Activated CD8-positive, alpha-beta T cell treated with anti-CD3 and anti-CD28 coated beads for 36 hours (primary cell): ENCODE measurements at regions of chr5 and their contacts with region 1.

Region 1: DNA sequence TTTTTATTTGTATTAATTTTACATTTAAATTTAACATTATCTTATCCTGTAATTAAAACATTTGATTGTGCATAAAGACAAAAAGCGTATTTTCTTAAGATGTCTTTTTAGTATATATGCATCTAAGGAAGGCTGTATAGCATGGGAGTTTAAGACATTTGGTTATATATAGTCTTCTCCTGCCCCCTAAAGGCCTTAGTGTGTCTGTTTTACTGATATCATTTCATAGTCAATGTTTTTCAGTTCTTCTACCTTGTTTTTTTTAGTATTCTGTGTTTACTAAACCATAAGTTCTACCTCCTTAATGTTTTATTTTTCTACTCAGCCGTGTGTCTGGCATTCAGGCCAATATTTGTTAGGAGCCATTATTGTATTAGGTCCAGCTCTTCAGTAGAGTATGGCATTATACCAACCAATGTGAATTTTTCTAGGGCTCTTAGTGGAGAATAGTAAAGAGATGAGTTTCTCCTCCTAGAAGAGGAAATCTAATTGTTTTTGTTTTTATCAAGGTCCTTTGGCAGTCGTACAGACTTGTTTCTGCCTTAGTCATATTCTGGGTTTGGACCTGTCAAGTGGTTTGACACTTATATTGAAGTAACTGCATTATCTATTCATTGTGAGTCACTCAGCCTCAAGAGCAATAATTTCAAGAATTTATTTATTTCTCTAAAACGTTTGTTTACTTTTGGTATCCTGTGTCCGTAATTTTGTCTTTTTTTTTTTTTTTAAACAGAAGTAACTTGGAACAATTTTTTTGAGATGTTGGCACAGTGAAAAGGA is 74.8 kb downstream of the SLF1 start:
- DNase-seq: no peak
- ATAC-seq: peak; percentile 47
- H3K4me3 Mint-ChIP-seq: no peak overlapping the region
- H3K27ac Mint-ChIP-seq: no peak overlapping the region
- H3K4me1 Mint-ChIP-seq: peaks cover 2% of the 10 kb centered on the region
- H3K27me3 Mint-ChIP-seq: no peaks in the 10 kb centered on the region
- CTCF ChIP-seq: no peak

Region 2: DNA sequence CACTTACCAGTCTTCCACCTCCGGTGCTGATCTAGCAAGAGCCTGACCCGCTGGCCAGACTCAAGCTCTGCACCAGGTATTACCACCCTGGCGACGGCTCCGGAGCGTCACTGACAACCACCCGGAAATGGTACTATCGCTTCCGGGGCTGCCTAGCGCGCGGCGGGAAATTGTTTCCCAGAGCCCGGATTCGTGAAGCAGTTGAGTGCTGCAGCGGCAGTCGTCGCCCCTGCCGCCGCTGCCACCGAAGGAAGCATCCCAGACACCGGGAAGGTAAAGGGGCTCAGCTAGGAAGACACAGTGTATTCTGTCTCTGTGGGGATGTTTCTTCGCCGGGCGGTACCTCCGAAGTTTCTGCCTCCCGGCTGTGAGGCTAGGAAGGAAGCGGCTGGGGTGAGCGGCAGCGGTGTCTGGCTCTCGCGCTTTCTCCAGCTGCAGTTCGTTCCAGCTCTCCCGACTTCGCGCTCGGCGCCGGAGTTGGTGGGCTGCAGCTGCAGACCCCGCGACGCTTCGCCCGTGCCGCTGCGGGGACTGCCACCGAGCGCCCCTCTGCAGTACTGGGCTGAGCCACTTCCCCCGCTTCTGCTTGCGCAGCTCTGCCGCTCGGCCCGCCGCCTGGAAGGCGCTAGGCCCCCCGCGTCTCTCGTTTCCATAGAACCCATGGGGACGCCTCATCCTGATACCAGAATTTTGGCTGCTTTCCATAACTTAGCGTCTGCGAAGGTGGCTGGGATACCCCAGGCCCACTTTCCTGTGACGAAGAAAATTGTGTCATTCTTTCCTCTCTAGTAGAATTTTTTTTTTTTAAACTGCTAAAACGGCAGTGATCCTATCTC is 74.5 kb before region 1 on chr5 and contains the starts of genes KIAA0825 and SLF1:
- CTCF ChIA-PET with region 1: no interaction called
- POLR2A ChIA-PET with region 1: no interaction called
- intact Hi-C with region 1: loop called (anchors 10 kb)
- DNase-seq: peak; percentile 93
- ATAC-seq: peak; percentile 88
- H3K4me3 Mint-ChIP-seq: peak within 1 kb of the TSS; percentile 81
- H3K27ac Mint-ChIP-seq: peak within 1 kb of the TSS; percentile 84
- H3K4me1 Mint-ChIP-seq: peaks cover 34% of the 10 kb centered on the region
- H3K27me3 Mint-ChIP-seq: no peaks in the 10 kb centered on the region
- CTCF ChIP-seq: no peak
- total RNA-seq, gene KIAA0825: 0.32 to 0.54 TPM
- total RNA-seq, gene SLF1: 11.5 to 14.5 TPM

Region 3: GRCh38 chr5:94661086-94661485 is 32.1 kb before region 1 on chr5:
- CTCF ChIA-PET with region 1: no interaction called
- POLR2A ChIA-PET with region 1: no interaction called
- intact Hi-C with region 1: no loop called
- DNase-seq: no peak
- ATAC-seq: no peak
- H3K4me3 Mint-ChIP-seq: no peak overlapping the region
- H3K27ac Mint-ChIP-seq: no peak overlapping the region
- H3K4me1 Mint-ChIP-seq: no peaks in the 10 kb centered on the region
- H3K27me3 Mint-ChIP-seq: no peaks in the 10 kb centered on the region
- CTCF ChIP-seq: no peak

Region 4: DNA sequence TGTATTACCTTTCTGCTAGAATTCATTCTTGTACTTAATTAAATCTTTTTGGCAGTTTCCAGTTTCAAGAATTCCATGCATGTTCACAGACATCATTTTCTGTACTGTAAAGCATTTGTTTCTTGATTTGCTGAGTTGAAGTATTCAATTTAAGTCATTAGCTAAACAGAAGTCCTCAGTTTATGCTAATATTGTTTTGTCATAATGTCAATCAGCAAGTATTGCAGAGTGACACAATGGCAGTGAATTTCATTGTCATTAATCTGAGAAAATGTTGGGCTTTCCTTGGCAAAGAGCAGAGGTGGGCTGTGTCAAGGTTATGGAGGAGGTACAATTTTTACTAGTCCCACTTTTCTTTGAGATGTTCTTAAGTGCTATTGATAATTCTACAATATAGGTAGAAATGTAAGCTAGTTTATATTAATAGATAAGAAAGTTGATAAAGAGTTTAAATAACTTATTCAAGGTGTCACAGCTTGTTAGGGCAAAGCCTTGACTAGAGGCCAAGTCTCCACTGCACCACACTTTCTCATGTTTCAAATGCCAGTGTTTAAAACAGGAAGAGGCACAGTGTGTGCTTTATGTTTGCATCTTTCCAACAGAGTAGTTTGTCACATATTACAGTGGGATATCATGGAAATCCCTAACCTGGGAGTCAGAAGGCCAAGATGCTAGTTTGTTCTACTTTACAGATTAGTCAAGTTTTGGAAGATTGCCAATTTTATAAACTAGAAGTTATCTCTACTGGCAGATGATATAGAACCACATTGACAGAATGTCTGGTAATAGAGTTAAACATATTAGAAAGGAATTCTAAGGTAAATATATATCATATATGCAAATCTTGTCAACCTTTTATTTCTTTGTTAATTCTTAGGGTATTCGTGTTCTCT is 18.5 kb before region 1 on chr5:
- CTCF ChIA-PET with region 1: no interaction called
- POLR2A ChIA-PET with region 1: no interaction called
- intact Hi-C with region 1: no loop called
- DNase-seq: no peak
- ATAC-seq: no peak
- H3K4me3 Mint-ChIP-seq: no peak overlapping the region
- H3K27ac Mint-ChIP-seq: no peak overlapping the region
- H3K4me1 Mint-ChIP-seq: no peaks in the 10 kb centered on the region
- H3K27me3 Mint-ChIP-seq: no peaks in the 10 kb centered on the region
- CTCF ChIP-seq: no peak

Region 5: GRCh38 chr5:94707359-94707758 is 14.1 kb after region 1 on chr5:
- CTCF ChIA-PET with region 1: no interaction called
- POLR2A ChIA-PET with region 1: no interaction called
- intact Hi-C with region 1: no loop called
- DNase-seq: no peak
- ATAC-seq: no peak
- H3K4me3 Mint-ChIP-seq: no peak overlapping the region
- H3K27ac Mint-ChIP-seq: no peak overlapping the region
- H3K4me1 Mint-ChIP-seq: peaks cover 3% of the 10 kb centered on the region
- H3K27me3 Mint-ChIP-seq: no peaks in the 10 kb centered on the region
- CTCF ChIP-seq: no peak

Region 6: DNA sequence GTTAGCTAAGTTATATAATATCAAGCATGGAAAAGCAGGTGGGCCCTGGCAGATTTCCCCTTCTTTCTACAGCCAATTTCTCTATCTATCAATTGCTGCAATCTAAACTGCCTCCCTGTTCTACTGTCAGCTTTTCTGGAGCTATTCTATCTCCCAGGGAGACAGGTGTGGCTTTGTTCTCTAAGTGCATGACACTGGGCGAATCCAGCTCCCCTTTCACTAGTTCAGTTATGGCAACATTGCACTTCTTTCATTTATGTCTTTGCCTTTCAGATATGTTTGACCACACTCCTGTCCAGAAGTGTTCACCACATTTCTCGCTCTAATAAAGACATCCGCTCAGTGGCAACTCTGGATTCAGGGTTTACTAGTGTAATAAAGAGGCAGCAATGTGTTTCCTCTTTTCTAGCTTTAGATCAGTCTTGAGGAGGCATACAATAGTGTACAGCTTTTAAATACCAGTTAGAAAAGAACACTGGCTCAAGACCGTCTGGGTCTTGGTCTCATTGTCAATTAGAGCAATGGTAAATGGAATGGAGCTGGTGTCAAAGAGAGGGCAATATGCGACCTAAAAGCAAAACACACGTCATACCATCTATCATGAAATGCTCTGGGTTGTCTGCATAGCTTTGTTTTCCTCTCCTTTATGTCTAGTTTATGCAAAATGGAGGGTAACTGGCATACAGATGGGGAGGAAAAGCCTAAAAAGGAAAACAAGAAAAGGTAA is 122.2 kb after region 1 on chr5:
- CTCF ChIA-PET with region 1: no interaction called
- POLR2A ChIA-PET with region 1: no interaction called
- intact Hi-C with region 1: no loop called
- DNase-seq: no peak
- ATAC-seq: no peak
- H3K4me3 Mint-ChIP-seq: no peak overlapping the region
- H3K27ac Mint-ChIP-seq: no peak overlapping the region
- H3K4me1 Mint-ChIP-seq: no peaks in the 10 kb centered on the region
- H3K27me3 Mint-ChIP-seq: no peaks in the 10 kb centered on the region
- CTCF ChIP-seq: no peak